Ascending aorta (tissue), 2 donors: ENCODE measurements at regions of chr21 and their contacts with region 1.

Region 1: DNA sequence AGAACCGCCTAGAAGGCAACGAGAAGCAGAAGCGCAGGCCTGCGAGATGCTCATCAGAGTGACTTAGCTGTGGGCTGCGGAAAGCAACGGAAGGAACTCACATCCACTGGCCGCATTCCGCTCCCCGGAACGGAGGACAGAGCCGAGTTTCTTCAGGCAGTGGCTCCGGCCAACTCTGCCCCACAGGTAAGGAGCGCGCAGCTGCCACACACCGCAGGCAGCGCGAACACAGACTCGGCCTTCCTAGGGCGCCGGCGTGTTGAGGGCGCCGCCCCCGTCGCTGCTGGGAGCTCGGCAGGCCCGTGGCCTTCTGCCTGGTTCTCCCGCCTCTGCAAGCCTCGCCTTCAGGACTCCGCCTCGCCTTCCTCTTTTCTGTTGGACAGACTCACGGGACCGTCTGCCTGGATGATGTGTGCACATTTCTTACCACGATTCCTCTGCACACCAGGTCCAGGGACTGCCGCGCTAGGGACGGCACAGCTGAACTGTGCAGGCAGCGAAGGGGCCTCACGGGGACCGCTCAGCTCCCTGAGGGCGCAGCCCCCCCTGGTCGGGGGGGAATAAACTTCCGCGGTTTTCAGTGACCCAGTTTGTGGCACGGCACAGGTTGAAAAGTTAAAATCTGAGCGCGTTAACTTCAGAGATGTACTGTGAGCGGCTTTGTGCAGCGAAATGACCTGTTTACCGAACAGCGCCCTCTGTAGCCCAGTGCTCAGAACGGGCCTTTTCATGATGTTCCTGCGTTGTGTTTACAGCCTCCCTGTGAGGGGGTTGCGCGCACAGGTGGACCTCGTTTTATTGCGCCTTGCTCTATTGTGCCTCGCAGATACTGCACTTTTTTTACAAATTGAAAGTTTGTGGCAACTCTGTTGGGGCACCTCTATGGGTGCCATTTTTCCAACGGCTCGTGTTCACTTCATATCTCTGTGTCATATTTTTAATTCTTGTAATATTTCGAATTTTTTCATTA is 15.8 kb downstream of the TCP10L start:
- DNase-seq: peak; percentile 29 to 86
- H3K4me3 ChIP-seq: peak overlapping the region; percentile 58 to 68
- H3K27ac ChIP-seq: peak overlapping the region; percentile 69 to 77
- H3K4me1 ChIP-seq: peaks cover 10 to 22% of the 10 kb centered on the region in 2 donors
- H3K27me3 ChIP-seq: no peaks in the 10 kb centered on the region
- CTCF ChIP-seq: peak; percentile 81 to 86 (median 82)

Region 2: GRCh38 chr21:32278518-32279376 is 290.8 kb before region 1 on chr21 and contains the start of gene MIS18A:
- intact Hi-C with region 1: loop called (anchors 2 kb)
- DNase-seq: peak; percentile 80 to 98
- H3K4me3 ChIP-seq: peak within 1 kb of the TSS; percentile 69 to 77
- H3K27ac ChIP-seq: peak within 1 kb of the TSS; percentile 44 to 65
- H3K4me1 ChIP-seq: peaks cover 9 to 13% of the 10 kb centered on the region in 2 donors
- H3K27me3 ChIP-seq: no peaks in the 10 kb centered on the region
- CTCF ChIP-seq: peak in 1 of 3 experiments; percentile 6
- total RNA-seq, gene MIS18A: 0.64 TPM

Region 3: DNA sequence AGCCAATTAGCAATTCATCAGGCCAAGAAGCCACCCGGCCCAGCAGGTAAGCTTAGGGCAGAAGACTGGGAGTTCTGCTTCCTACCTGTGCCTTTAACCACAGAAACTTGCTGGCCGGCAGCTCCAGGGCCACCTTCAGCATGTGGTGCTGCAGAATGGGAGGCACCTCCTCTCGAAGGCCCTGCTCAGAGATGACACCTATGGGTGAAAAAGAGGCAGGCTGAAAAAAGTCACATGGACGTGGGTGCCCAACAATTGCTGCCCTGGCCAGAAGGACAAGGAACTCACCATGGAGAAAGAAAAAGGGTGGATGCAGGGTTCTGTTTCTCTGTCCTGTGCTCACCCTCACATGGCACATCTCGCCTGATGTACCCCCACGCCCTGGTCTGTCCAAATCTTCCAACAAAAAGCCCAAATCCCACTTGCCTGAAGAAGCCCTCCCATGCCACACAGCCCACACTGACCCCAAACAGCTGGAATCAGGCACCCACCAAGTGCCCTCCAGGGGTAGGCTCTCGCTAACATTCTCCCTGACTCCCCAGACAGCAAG is 209.8 kb before region 1 on chr21:
- intact Hi-C with region 1: no loop called
- DNase-seq: no peak
- H3K4me3 ChIP-seq: no peak overlapping the region
- H3K27ac ChIP-seq: no peak overlapping the region
- H3K4me1 ChIP-seq: peaks cover 0 to 1% of the 10 kb centered on the region in 2 donors
- H3K27me3 ChIP-seq: no peaks in the 10 kb centered on the region
- CTCF ChIP-seq: no peak

Region 4: GRCh38 chr21:32371913-32372314 is 197.6 kb before region 1 on chr21:
- intact Hi-C with region 1: loop called (anchors 1 kb)
- DNase-seq: peak in 1 of 2 donors; percentile 77
- H3K4me3 ChIP-seq: peak overlapping the region in 1 of 2 donors; percentile 2
- H3K27ac ChIP-seq: peak overlapping the region; percentile 84 to 86
- H3K4me1 ChIP-seq: peaks cover 0 to 31% of the 10 kb centered on the region in 2 donors
- H3K27me3 ChIP-seq: no peaks in the 10 kb centered on the region
- CTCF ChIP-seq: no peak

Region 5: GRCh38 chr21:32403201-32403777 is 166.3 kb before region 1 on chr21:
- intact Hi-C with region 1: loop called (anchors 2 kb)
- DNase-seq: peak in 1 of 2 donors; percentile 83
- H3K4me3 ChIP-seq: no peak overlapping the region
- H3K27ac ChIP-seq: no peak overlapping the region
- H3K4me1 ChIP-seq: peaks cover 0 to 2% of the 10 kb centered on the region in 2 donors
- H3K27me3 ChIP-seq: no peaks in the 10 kb centered on the region
- CTCF ChIP-seq: peak; percentile 71 to 77 (median 72)

Region 6: GRCh38 chr21:32463889-32464300 is 105.7 kb before region 1 on chr21:
- intact Hi-C with region 1: loop called (anchors 5 kb)
- DNase-seq: no peak
- H3K4me3 ChIP-seq: no peak overlapping the region
- H3K27ac ChIP-seq: peak overlapping the region; percentile 83 to 93
- H3K4me1 ChIP-seq: peaks cover 8 to 24% of the 10 kb centered on the region in 2 donors
- H3K27me3 ChIP-seq: no peaks in the 10 kb centered on the region
- CTCF ChIP-seq: no peak

Region 7: DNA sequence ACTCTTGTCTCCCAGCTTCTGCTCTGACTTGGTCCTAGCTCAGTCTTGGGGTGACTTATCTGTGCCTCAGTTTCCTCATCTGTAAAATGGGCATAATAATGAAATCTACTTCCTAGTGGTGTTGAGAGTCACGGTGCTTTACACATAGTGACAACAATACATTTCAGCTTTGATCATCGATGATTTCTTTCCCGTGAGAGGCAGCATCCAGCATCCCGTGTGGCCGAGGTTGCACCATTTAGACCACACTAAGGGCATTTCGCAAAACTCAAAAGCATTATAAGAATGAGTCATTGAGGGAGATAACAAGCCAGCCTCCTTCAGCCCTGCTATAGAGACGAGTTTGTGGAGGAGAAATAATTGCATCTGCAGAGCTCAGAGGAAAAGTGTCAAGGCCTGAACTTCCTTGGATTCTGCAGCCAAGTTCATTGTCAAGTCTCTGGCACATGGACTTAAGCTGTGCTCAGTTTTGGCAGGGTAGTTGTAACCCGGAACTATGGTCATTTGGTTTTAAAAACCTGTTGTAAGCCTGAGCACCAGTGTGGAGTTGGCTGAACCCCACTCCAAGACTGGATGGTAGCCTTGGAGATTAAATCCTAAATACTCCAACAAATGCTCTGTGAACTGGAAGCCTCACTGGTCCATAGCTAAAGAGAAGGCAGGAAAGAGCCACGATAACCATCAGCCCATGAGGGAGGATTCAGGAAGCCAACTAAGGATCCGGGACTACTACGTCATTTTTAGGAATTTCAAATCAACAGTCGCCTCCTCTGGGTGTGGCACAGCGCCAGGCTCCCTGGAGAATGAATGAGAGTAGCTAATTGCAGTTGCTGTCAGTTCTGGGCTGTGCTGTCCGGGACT is 48.4 kb before region 1 on chr21:
- intact Hi-C with region 1: loop called (anchors 5 kb)
- DNase-seq: peak in 1 of 2 donors; percentile 88
- H3K4me3 ChIP-seq: no peak overlapping the region
- H3K27ac ChIP-seq: peak overlapping the region; percentile 49 to 59
- H3K4me1 ChIP-seq: peaks cover 0 to 29% of the 10 kb centered on the region in 2 donors
- H3K27me3 ChIP-seq: no peaks in the 10 kb centered on the region
- CTCF ChIP-seq: no peak